Left cardiac atrium (tissue), 4 donors: ENCODE measurements at regions of chr11 and their contacts with region 1.

Region 1: DNA sequence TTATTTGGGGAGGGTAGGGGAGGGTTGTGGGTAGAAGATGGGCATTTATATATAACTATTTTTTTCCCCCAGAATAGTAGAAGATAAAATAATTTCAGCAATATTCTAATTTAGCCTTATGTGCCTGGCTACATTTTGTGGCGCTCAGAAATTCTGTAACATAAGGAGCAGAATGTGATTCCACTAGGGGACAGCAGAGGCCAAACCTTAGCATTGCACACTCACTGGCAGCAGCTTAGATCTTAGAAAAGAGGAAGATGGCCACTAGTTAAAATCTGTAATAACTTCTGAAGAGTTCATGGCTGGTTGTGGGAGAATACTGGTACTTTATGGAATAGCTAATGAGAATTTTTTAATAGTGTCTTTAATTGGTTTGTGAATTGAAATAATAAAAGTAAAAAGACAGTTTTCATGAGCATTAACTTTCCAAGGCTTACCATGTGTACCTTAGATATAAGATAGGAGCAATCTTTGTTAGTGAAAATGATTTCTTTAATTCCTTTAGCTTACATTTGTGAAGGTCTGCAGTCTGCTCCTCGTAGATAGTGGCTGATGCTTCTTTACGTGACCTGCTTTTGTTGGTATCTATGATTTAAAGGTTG is 33.1 kb downstream of the DDX10 start:
- DNase-seq: peak; percentile 40
- ATAC-seq: peak; percentile 82 to 85

Region 2: DNA sequence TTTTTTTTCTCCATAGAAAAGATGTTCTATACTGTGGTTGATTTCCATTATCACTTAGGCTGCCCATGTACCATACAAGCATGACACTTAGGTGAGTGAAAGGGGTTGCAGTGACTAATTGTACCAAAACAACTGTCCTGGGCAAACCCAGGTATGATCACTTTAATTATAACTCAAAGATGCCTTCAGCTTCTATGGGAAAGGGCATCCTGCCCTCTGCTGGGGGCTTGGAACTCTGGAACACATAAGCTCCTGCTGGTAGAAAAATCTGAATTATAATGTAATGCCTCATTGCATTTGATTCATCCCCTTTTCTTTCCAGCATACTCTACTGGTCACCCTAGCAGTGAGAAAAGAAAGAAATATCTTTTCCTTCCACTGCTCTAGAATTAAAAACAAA is 173.2 kb after region 1 on chr11:
- intact Hi-C with region 1: loop called in 1 of 2 experiments (anchors 10 kb)
- DNase-seq: peak; percentile 29
- ATAC-seq: peak; percentile 34 to 47

Region 3: DNA sequence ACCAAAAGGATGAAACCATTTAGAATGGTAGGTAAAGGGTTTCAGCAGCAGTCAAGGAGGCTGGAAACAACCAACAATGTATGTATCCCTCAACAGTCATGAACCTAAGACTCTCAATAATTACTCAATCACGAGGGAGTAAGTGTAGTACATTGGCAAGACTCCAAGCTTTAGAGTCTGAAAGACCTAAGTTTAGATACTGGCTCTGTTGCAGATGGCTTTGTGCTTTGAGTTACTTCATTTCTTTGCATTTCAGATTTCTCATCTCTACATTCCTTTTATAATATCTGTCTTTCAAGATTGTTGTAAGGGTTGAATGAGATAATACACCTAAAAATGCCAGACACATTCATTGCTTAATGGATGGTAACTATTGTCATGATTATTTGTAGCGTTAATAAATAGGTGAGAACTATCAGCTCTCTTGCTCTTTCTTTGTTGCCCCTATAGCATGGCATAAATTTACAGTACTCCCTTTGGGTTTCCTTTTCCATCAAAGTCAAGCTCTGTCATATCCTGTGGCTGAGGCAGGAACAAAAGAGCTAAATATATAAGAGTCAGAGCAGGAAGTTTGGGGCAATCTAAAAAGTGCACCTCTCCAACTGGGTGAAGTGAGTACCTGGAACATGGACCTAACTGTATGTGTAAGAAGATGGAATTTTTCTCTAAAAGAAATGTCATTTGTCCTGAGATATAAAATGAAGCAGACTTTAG is 1167.0 kb after region 1 on chr11:
- intact Hi-C with region 1: loop called (anchors 5 to 10 kb)
- DNase-seq: no peak
- ATAC-seq: no peak

Region 4: DNA sequence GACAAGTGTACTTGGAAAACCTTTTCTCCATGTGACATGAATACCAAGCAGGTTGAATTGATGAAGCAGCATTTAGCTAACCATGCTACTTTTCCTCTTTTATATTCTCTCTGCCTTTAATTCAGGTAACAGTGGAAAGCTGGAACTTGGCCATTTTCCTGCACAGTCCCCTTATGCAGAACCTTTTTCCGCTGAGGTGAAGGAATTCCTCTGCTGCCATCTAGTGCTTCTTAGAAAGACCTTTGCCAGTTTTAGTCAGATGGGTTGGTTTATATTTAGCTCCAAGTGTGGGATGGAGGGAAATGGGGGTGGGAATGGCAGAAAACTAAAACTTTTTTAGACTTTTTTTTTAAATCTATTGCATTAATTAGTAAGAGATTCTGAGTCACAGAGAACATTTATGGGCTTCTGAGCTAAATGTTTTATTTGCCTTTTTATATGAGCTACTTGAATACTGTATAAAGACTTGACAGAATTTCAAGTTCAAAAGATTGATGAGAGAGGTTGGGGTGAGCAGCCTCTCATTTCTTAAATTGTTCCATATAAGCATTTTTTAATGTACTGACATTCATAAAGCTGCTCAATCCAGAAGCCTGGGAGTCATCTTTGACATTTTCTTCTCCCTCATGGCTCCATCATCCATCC is 1241.3 kb after region 1 on chr11:
- intact Hi-C with region 1: loop called in 1 of 2 experiments (anchors 2 kb)
- DNase-seq: no peak
- ATAC-seq: peak; percentile 77 to 86